ENCODE measurements at regions of chr10 and their contacts with region 1.

Region 1: GRCh38 chr10:22988581-22989360 is 60.9 kb downstream of the ARMC3 start:
- DNase-seq: peak in 8 of 10 donors; percentile 22 to 89 (median 64)

Region 2: GRCh38 chr10:21495752-21496342 is 1492.9 kb before region 1 on chr10:
- intact Hi-C with region 1: loop called (anchors 5 kb)
- DNase-seq: peak; percentile 81 to 98 (median 86)

Region 3: GRCh38 chr10:22185586-22185985 is 803.2 kb before region 1 on chr10:
- intact Hi-C with region 1: no loop called
- DNase-seq: no peak

Region 4: GRCh38 chr10:22316285-22317120 is 672.3 kb before region 1 on chr10 and contains the start of gene COMMD3:
- intact Hi-C with region 1: loop called (anchors 5 kb)
- DNase-seq: peak; percentile 79 to 97 (median 86)

Region 5: DNA sequence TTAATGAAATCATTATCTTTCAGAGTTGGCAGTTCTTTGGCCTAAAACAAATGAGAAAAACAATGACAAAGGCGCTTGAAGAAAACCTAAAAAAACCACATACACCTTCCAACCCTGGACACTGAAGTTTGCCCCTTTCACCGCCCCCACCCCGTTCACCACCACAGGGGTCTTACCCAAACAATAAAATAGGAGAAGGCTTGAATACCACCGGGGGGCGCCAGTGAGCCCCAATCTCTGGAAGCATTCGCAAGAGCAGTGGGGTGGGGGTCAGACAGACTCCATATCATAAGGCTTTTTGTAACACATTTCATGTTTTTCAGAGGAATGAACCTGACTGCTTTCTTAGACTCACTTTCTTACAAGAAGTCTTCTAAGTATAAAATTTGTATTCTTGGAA is 438.0 kb before region 1 on chr10:
- intact Hi-C with region 1: loop called (anchors 10 kb)
- DNase-seq: peak in 5 of 10 donors; percentile 34 to 87 (median 53)

Region 6: GRCh38 chr10:22704471-22704911 is 284.3 kb before region 1 on chr10:
- intact Hi-C with region 1: no loop called
- DNase-seq: no peak

Region 7: GRCh38 chr10:22714479-22715289 is 274.1 kb before region 1 on chr10 and contains the start of gene PIP4K2A:
- intact Hi-C with region 1: loop called (anchors 5 kb)
- DNase-seq: peak; percentile 61 to 96 (median 71)